ENCODE measurements at regions of chr22 and their contacts with region 1.

Region 1: DNA sequence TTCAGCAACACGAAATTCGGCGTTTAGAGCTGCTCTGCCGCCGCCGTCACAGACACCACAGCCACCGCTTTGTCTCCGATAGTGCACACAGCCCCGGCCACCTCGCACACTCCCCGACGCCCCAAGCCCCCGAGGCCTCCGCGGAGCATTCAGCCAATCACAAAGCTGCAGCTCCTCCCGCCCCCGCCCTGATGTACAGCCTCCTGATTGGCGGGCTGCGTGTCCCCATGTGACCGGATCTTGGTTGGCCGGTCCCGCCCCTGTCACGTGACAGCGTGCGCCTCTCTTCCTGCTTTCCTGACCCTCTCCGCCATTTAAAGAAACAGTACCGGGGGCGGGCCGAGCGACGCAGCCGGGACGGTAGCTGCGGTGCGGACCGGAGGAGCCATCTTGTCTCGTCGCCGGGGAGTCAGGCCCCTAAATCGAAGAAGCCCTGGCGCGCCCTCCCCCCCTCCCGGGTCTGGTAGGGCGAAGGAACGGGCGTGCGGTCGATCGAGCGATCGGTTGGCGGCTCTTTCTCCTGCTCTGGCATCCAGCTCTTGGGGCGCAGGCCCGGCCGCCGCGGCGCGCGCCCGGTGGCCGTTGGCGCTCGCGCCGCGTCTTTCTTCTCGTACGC is at the start of gene TUG1:
- DNase-seq: peak; percentile 97
- H3K4me3 ChIP-seq: peak within 1 kb of the TSS; percentile 55 to 79 (median 65)
- H3K27ac ChIP-seq: peak within 1 kb of the TSS; percentile 73
- H3K4me1 ChIP-seq: peaks cover 15% of the 10 kb centered on the region
- H3K27me3 ChIP-seq: no peaks in the 10 kb centered on the region
- CTCF ChIP-seq: no peak
- total RNA-seq, gene TUG1: 63.3 to 68.0 TPM

Region 2: DNA sequence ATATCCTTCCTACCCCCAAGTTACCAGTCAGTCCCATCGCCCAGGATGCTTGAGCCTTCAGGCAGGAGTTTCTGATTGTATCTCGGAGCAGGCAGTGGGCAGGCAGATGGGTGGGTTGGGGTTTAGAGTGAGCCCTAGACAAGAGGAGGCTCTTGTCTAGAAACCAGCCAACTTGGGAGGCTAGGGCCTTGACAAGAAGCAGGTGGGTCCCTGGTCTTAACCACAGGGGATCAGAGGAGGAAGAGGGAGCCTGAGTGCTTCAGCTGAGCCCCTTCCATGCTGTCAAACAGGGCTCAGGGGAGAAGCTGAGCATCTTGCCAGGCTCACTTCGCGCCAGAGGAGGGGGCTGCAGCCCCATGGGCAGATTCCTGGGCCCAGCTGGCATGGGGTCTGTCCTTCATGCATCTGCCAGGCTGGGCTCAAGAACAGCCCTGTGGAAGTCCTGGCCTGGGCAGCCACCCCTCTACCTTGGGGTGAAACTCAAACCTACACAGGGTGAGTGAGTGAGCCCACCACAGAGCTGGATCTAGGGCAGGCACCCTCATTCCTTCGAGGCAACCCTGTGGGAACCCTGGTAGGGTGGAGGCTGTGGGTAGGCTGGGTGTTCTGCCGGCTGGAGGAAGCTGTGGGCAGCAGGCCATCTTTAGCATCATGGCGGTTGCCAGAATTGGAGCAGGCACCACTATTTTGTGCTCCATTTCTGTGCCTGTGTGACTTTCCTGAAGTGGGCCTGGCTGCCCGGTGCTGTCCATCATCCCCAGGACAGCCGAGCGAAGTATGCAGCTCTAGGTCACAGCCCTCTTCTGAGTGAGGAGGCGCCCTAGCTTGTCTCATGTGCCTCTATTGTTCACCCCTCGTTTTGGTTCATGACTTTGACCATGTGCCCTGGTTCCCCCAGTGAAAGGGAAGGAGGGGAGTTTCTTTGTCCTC is 108.6 kb before region 1 on chr22:
- CTCF ChIA-PET with region 1: no interaction called
- dilution Hi-C with region 1: no loop called
- in situ Hi-C with region 1: no loop called
- intact Hi-C with region 1: no loop called
- DNase-seq: no peak
- H3K4me3 ChIP-seq: no peak overlapping the region
- H3K27ac ChIP-seq: no peak overlapping the region
- H3K4me1 ChIP-seq: no peaks in the 10 kb centered on the region
- H3K27me3 ChIP-seq: no peaks in the 10 kb centered on the region
- CTCF ChIP-seq: no peak

Region 3: GRCh38 chr22:31036671-31037550 is 67.9 kb after region 1 on chr22:
- CTCF ChIA-PET with region 1: no interaction called
- dilution Hi-C with region 1: loop called (anchors 5 kb)
- in situ Hi-C with region 1: no loop called
- intact Hi-C with region 1: no loop called
- DNase-seq: peak; percentile 67
- H3K4me3 ChIP-seq: peak overlapping the region in 2 of 3 experiments; percentile 17 to 18
- H3K27ac ChIP-seq: no peak overlapping the region
- H3K4me1 ChIP-seq: peaks cover 11% of the 10 kb centered on the region
- H3K27me3 ChIP-seq: no peaks in the 10 kb centered on the region
- CTCF ChIP-seq: peak; percentile 12 to 46

Measured in mammary epithelial cell (primary cell).